HEK293T (cell line): ENCODE measurements at regions of chrX and their contacts with region 1.

Region 1: GRCh38 chrX:13646154-13646549 is 6.8 kb upstream of the TCEANC start:
- DNase-seq: peak; percentile 63

Region 2: GRCh38 chrX:13506574-13506973 is 139.6 kb before region 1 on chrX:
- CTCF ChIA-PET with region 1: interaction called, 28 read pairs
- POLR2A ChIA-PET with region 1: interaction called, 3 read pairs
- DNase-seq: peak; percentile 59

Region 3: GRCh38 chrX:14039344-14039743 is 393.2 kb after region 1 on chrX:
- CTCF ChIA-PET with region 1: no interaction called
- POLR2A ChIA-PET with region 1: no interaction called
- DNase-seq: peak; percentile 43